Heart left ventricle (tissue), 16 donors: ENCODE measurements at regions of chr2 and their contacts with region 1.

Region 1: DNA sequence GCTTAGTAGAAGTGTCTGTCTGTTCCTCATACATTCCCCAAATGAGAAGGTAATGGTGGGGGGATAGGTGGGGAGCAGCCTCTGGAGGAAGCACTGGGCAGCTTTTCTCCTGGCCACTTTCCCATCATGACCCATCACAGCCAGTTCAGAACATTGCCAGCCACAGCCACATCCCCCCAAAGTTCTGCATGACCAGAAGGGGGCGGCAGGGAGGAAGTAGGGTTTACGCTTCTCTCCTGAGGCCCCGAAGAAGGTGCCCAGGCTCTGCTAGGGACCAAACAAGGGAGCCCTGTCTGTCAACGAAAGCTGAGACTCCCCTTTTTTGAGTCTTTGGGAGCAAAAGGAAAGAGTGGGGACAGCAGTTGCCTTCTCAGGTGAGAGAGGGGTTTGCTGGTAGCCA is 7.7 kb downstream of the IGFBP5 start:
- DNase-seq: no peak
- ATAC-seq: no peak
- H3K4me3 ChIP-seq: no peak overlapping the region
- H3K27ac ChIP-seq: peak overlapping the region in 2 of 12 donors; percentile 36 to 88
- H3K4me1 ChIP-seq: peaks cover 6 to 91% (median 44%) of the 10 kb centered on the region in 12 donors
- H3K27me3 ChIP-seq: peaks cover 0 to 30% (median 0%) of the 10 kb centered on the region in 9 donors
- CTCF ChIP-seq: peak in 7 of 12 donors; percentile 13 to 40 (median 20)
- POLR2A ChIP-seq: no peak

Region 2: GRCh38 chr2:216740557-216741222 is 53.0 kb after region 1 on chr2:
- intact Hi-C with region 1: no loop called
- DNase-seq: peak in 2 of 5 donors; percentile 24 to 38
- ATAC-seq: peak; percentile 23 to 78 (median 60)
- H3K4me3 ChIP-seq: no peak overlapping the region
- H3K27ac ChIP-seq: peak overlapping the region in 6 of 12 donors; percentile 22 to 76 (median 52)
- H3K4me1 ChIP-seq: peaks cover 0 to 21% (median 1%) of the 10 kb centered on the region in 12 donors
- H3K27me3 ChIP-seq: no peaks in the 10 kb centered on the region
- CTCF ChIP-seq: no peak
- POLR2A ChIP-seq: no peak

Region 3: GRCh38 chr2:216775043-216775453 is 87.4 kb after region 1 on chr2:
- intact Hi-C with region 1: no loop called
- DNase-seq: peak; percentile 52 to 83 (median 57)
- ATAC-seq: peak; percentile 45 to 83 (median 64)
- H3K4me3 ChIP-seq: no peak overlapping the region
- H3K27ac ChIP-seq: peak overlapping the region; percentile 0 to 92 (median 84)
- H3K4me1 ChIP-seq: peaks cover 6 to 40% (median 24%) of the 10 kb centered on the region in 12 donors
- H3K27me3 ChIP-seq: no peaks in the 10 kb centered on the region
- CTCF ChIP-seq: no peak
- POLR2A ChIP-seq: no peak

Region 4: DNA sequence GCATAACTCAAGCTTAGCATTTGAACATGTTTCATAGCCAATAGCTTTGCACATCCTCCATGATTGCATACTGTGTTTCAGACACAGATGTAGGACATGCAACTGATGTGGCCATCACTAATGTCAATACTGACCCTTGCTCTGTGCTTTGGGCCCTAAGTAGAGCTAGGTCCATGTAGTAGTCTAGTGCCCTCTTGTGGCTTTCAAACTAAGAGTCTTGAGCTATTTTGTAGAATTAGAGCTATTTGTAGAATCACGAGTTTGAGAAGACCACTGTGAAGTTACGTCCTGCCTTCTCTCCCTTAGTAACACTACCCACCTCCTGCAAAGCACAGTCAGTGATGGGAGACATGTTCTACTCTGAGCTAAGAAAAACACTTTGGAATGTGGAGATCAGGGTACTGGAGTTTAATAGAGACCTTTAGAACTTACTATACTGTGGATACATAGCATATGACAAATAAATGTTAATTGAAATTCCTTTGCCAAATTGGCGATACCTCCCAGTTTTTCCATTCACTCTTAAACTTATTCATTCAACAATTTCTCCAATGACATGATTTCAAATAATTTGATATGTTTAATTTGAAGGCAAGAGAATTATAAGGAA is 478.7 kb after region 1 on chr2:
- intact Hi-C with region 1: loop called in 2 of 10 experiments (anchors 5 kb)
- DNase-seq: peak in 1 of 5 donors; percentile 22
- ATAC-seq: peak; percentile 55 to 81 (median 68)
- H3K4me3 ChIP-seq: no peak overlapping the region
- H3K27ac ChIP-seq: no peak overlapping the region
- H3K4me1 ChIP-seq: peaks cover 0 to 24% (median 6%) of the 10 kb centered on the region in 12 donors
- H3K27me3 ChIP-seq: peaks cover 0 to 52% (median 0%) of the 10 kb centered on the region in 9 donors
- CTCF ChIP-seq: peak; percentile 51 to 82 (median 64)
- POLR2A ChIP-seq: no peak

Region 5: GRCh38 chr2:217501887-217502286 is 814.2 kb after region 1 on chr2:
- intact Hi-C with region 1: loop called in 1 of 10 experiments (anchors 5 kb)
- DNase-seq: no peak
- ATAC-seq: no peak
- H3K4me3 ChIP-seq: no peak overlapping the region
- H3K27ac ChIP-seq: no peak overlapping the region
- H3K4me1 ChIP-seq: no peaks in the 10 kb centered on the region
- H3K27me3 ChIP-seq: no peaks in the 10 kb centered on the region
- CTCF ChIP-seq: no peak
- POLR2A ChIP-seq: no peak

Region 6: DNA sequence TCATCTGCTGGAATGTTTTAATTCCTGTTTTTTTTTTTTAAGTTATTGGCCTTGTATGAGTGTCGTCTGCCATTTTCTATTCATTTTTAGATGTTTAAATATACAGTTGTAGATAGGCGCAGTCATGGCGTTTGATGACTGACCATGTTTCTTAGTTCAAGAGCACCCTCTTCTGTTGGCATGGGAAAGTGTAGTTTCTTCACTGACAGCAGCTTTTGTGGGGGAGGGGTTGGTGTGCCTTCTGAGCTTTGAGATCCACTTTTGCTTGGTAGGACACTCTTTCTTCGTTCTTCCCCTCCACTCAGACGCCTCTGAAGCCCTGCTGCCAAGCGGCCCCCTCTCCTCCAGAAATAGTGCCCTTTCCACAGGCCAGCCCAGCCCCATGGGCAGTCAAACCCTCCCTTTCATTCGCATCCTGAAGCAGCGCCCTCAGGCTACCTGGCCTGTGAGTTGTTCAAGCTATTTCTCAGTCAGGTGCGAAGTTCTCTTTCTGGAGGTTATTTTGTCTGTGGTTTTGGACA is 823.2 kb after region 1 on chr2:
- intact Hi-C with region 1: loop called in 8 of 10 experiments (anchors 2 to 5 kb)
- DNase-seq: peak in 4 of 5 donors; percentile 39 to 77 (median 62)
- ATAC-seq: peak; percentile 88 to 93 (median 91)
- H3K4me3 ChIP-seq: no peak overlapping the region
- H3K27ac ChIP-seq: peak overlapping the region in 2 of 12 donors; percentile 2 to 16
- H3K4me1 ChIP-seq: peaks cover 0 to 24% (median 5%) of the 10 kb centered on the region in 12 donors
- H3K27me3 ChIP-seq: no peaks in the 10 kb centered on the region
- CTCF ChIP-seq: peak; percentile 30 to 82 (median 72)
- POLR2A ChIP-seq: no peak

Region 7: GRCh38 chr2:217650716-217651360 is 963.2 kb after region 1 on chr2:
- intact Hi-C with region 1: loop called in 1 of 10 experiments (anchors 5 kb)
- DNase-seq: peak in 3 of 5 donors; percentile 33 to 43 (median 34)
- ATAC-seq: peak in 2 of 4 donors; percentile 73 to 84
- H3K4me3 ChIP-seq: no peak overlapping the region
- H3K27ac ChIP-seq: no peak overlapping the region
- H3K4me1 ChIP-seq: peaks cover 0 to 16% (median 0%) of the 10 kb centered on the region in 12 donors
- H3K27me3 ChIP-seq: no peaks in the 10 kb centered on the region
- CTCF ChIP-seq: peak; percentile 62 to 84 (median 72)
- POLR2A ChIP-seq: no peak

Region 8: DNA sequence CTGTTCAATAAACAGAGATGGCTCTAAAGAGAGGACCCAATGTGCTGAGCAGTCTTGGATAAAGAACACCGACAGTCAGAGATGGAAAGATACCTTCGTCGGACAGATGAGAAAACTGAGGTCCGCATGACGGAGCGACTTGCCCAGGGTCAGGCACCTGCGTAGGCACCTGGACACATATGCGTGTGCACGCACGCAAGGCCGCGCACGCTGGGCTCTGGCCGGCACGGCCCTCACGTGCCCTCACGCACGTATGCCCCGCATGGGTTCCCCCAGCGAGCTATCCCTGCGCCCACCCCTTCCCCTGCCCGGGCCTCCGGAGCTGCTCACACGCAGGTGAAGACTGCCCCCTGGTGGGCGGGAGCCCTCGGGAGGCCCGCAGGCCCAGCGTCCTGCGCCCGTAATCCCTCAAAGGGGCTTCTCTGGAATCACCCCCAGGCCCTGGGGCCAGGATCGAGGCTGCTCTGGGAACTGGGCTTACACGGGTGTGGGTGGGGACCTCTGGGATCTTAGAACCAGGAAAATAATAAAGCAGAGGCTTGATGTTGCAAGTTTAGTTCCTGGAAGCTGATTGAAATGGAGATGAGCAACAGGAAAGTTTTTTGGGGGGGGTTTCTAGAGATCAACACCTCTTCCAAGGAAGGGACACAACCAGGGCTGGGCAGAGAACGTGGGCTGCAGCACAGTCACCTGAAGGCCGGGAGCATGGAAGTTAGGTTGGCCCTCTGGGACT is 1068.9 kb after region 1 on chr2:
- intact Hi-C with region 1: loop called in 5 of 10 experiments (anchors 5 to 10 kb)
- DNase-seq: peak; percentile 65 to 84 (median 74)
- ATAC-seq: peak; percentile 76 to 91 (median 86)
- H3K4me3 ChIP-seq: peak overlapping the region in 8 of 12 donors; percentile 11 to 39 (median 31)
- H3K27ac ChIP-seq: peak overlapping the region in 1 of 12 donors; percentile 26
- H3K4me1 ChIP-seq: peaks cover 0 to 24% (median 7%) of the 10 kb centered on the region in 12 donors
- H3K27me3 ChIP-seq: peaks cover 0 to 6% (median 0%) of the 10 kb centered on the region in 9 donors
- CTCF ChIP-seq: peak; percentile 87 to 98 (median 94)
- POLR2A ChIP-seq: no peak